ENCODE measurements at regions of chr9 and their contacts with region 1.

Region 1: GRCh38 chr9:71647094-71647591 is 121.2 kb downstream of the CEMIP2 start:
- DNase-seq: peak; percentile 92

Region 2: GRCh38 chr9:71683598-71684235 is 36.6 kb after region 1 on chr9:
- intact Hi-C with region 1: loop called (anchors 5 kb)
- DNase-seq: no peak

Measured in cardiac septum (tissue), 1 donor.